Activated naive CD4-positive, alpha-beta T cell treated with anti-CD3 and anti-CD28 coated beads for 36 hours (primary cell): ENCODE measurements at regions of chr1 and their contacts with region 1.

Region 1: DNA sequence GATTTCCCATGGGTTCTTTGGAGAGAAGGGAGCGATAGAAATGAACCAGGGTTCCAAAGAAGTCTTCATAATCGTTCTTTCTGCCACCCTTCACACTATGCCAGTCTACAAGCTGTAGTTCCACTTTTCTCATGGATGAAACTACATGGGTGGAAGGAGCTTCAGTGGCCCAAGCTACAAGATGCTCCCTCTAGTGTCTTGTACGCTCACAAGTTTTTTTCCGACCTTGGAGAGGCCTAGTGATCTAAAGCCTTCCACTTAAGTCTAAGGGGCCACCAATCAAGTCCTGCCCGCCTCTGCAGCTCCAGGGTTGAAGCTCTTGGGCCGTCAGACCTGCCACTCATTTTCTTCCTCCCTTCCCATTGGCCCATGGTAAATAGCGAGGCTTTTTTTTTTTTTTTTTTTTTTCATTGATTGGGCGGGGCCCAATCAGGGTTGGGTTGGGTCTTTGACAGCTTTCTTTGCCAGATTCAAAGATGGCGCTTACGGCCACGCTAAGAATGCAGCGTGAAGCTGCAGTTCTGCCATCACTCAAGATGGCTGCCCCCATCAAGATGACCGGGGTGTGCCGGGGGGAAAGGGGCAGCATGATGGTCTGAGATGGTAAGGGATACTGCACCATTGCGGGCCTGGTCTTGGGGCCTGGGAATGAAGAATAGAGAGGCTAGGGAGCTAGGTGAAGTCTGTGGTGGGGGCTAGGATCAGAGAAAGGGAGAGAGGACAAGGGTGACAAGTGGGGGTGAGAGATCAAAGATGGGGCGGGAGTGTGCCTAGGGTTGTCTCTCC is at the start of gene TOMM40L:
- DNase-seq: peak; percentile 95
- H3K4me3 Mint-ChIP-seq: peak within 1 kb of the TSS; percentile 100
- H3K27ac Mint-ChIP-seq: peak within 1 kb of the TSS; percentile 98
- H3K4me1 Mint-ChIP-seq: peaks cover 36% of the 10 kb centered on the region
- H3K27me3 Mint-ChIP-seq: no peaks in the 10 kb centered on the region
- total RNA-seq, gene TOMM40L: 13.2 to 14.3 TPM

Region 2: DNA sequence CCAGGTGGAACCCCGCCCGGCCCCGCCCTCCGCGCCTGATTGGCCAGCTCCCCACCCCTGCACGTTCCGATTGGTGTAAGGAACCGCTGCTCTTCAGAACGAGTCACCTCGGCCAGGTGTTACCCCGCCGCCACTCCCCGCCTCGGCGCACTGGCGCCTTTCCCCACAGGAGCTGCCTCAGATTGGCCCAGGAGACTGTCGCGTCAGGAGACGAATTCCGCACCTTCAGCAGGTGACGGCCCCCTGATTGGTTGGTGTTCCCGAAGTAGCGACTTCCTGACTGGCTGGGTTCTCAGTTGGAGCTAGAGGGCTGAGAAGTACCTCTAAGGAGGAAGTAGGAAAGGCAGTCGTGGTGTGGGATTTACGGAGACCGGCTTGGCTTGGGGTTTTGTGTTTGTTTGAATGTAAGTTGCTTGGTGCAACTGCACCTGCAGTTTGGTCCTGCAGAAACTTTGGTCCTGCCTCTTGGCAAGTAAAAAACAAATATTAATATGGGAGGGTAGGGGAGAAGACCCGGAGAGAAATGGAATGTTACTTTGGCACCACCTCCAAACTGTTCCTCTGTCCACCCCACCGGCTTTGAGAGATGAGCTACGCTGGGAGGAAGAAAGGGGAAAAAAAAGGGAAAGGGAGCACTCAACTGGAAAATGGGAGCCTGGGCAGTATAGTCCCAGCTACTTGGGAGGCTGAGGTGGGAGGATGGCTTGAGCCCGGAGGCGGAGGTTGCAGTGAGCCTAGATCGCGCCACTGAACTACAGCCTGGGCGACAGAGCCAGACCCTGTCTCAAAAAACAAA is 204.4 kb before region 1 on chr1:
- CTCF ChIA-PET with region 1: no interaction called
- intact Hi-C with region 1: no loop called
- DNase-seq: peak; percentile 94
- H3K4me3 Mint-ChIP-seq: peak overlapping the region; percentile 92
- H3K27ac Mint-ChIP-seq: peak overlapping the region; percentile 76
- H3K4me1 Mint-ChIP-seq: peaks cover 35% of the 10 kb centered on the region
- H3K27me3 Mint-ChIP-seq: no peaks in the 10 kb centered on the region

Region 3: GRCh38 chr1:161038523-161039153 is 187.1 kb before region 1 on chr1 and contains the start of gene TSTD1:
- CTCF ChIA-PET with region 1: no interaction called
- intact Hi-C with region 1: no loop called
- DNase-seq: peak; percentile 92
- H3K4me3 Mint-ChIP-seq: peak within 1 kb of the TSS; percentile 88
- H3K27ac Mint-ChIP-seq: peak within 1 kb of the TSS; percentile 77
- H3K4me1 Mint-ChIP-seq: peaks cover 36% of the 10 kb centered on the region
- H3K27me3 Mint-ChIP-seq: no peaks in the 10 kb centered on the region
- total RNA-seq, gene TSTD1: 50.3 to 51.5 TPM

Region 4: GRCh38 chr1:161185282-161185682 is 40.4 kb before region 1 on chr1:
- CTCF ChIA-PET with region 1: interaction called, 57 read pairs
- intact Hi-C with region 1: loop called (anchors 1 kb)
- DNase-seq: peak; percentile 94
- H3K4me3 Mint-ChIP-seq: peak overlapping the region; percentile 67
- H3K27ac Mint-ChIP-seq: peak overlapping the region; percentile 94
- H3K4me1 Mint-ChIP-seq: peaks cover 78% of the 10 kb centered on the region
- H3K27me3 Mint-ChIP-seq: no peaks in the 10 kb centered on the region

Region 5: GRCh38 chr1:161209790-161210409 is 15.8 kb before region 1 on chr1:
- CTCF ChIA-PET with region 1: interaction called, 196 read pairs
- intact Hi-C with region 1: loop called (anchors 1 kb)
- DNase-seq: peak; percentile 86
- H3K4me3 Mint-ChIP-seq: no peak overlapping the region
- H3K27ac Mint-ChIP-seq: peak overlapping the region; percentile 50
- H3K4me1 Mint-ChIP-seq: peaks cover 37% of the 10 kb centered on the region
- H3K27me3 Mint-ChIP-seq: no peaks in the 10 kb centered on the region

Region 6: DNA sequence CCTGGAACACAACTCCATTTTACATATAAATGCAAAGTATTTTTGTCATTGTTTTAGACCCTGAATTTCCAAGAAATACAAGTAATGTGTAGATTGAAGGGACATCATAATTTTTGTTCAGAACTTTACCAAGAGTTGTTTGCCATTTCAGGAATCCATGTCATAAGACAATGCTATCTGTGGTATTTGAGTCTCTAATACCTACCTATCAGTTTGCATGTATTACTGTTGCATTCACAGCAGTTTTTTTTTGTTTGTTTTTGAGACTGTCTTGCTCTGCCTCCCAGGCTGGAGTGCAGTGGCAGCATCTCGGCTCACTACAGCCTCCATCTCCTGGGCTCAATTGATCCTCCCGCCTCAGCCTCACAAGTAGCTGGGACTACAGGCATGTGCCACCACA is 66.9 kb after region 1 on chr1:
- CTCF ChIA-PET with region 1: interaction called, 82 read pairs
- intact Hi-C with region 1: loop called (anchors 1 kb)
- DNase-seq: no peak
- H3K4me3 Mint-ChIP-seq: no peak overlapping the region
- H3K27ac Mint-ChIP-seq: no peak overlapping the region
- H3K4me1 Mint-ChIP-seq: no peaks in the 10 kb centered on the region
- H3K27me3 Mint-ChIP-seq: no peaks in the 10 kb centered on the region

Region 7: GRCh38 chr1:161367684-161368400 is 142.1 kb after region 1 on chr1 and contains the start of gene CFAP126:
- CTCF ChIA-PET with region 1: interaction called, 7 read pairs
- intact Hi-C with region 1: loop called (anchors 5 kb)
- DNase-seq: peak; percentile 61
- H3K4me3 Mint-ChIP-seq: no peak within 1 kb of the TSS
- H3K27ac Mint-ChIP-seq: no peak within 1 kb of the TSS
- H3K4me1 Mint-ChIP-seq: peaks cover 12% of the 10 kb centered on the region
- H3K27me3 Mint-ChIP-seq: no peaks in the 10 kb centered on the region
- total RNA-seq, gene CFAP126: not detected

Region 8: GRCh38 chr1:161749509-161750407 is 524.0 kb after region 1 on chr1 and contains the start of gene DUSP12:
- CTCF ChIA-PET with region 1: no interaction called
- intact Hi-C with region 1: loop called (anchors 1 kb)
- DNase-seq: peak; percentile 94
- H3K4me3 Mint-ChIP-seq: peak within 1 kb of the TSS; percentile 98
- H3K27ac Mint-ChIP-seq: peak within 1 kb of the TSS; percentile 98
- H3K4me1 Mint-ChIP-seq: peaks cover 45% of the 10 kb centered on the region
- H3K27me3 Mint-ChIP-seq: no peaks in the 10 kb centered on the region
- total RNA-seq, gene DUSP12: 28.2 to 28.4 TPM